Mammary epithelial cell (primary cell): ENCODE measurements at regions of chr7 and their contacts with region 1.

Region 1: GRCh38 chr7:134613623-134614347 is 32.9 kb upstream of the BPGM start:
- DNase-seq: peak; percentile 99
- H3K4me3 ChIP-seq: no peak overlapping the region
- H3K27ac ChIP-seq: peak overlapping the region; percentile 84
- H3K4me1 ChIP-seq: peaks cover 33% of the 10 kb centered on the region
- H3K27me3 ChIP-seq: no peaks in the 10 kb centered on the region
- CTCF ChIP-seq: peak in 1 of 2 donors; percentile 24

Region 2: GRCh38 chr7:134448700-134449229 is 165.0 kb before region 1 on chr7:
- CTCF ChIA-PET with region 1: no interaction called
- dilution Hi-C with region 1: loop called (anchors 25 kb)
- in situ Hi-C with region 1: loop called in 1 of 2 experiments (anchors 10 kb)
- intact Hi-C with region 1: no loop called
- DNase-seq: peak; percentile 90
- H3K4me3 ChIP-seq: no peak overlapping the region
- H3K27ac ChIP-seq: peak overlapping the region; percentile 89
- H3K4me1 ChIP-seq: peaks cover 40% of the 10 kb centered on the region
- H3K27me3 ChIP-seq: no peaks in the 10 kb centered on the region
- CTCF ChIP-seq: no peak

Region 3: GRCh38 chr7:134646425-134647305 is 32.9 kb after region 1 on chr7 and contains the start of gene BPGM:
- CTCF ChIA-PET with region 1: no interaction called
- dilution Hi-C with region 1: no loop called
- in situ Hi-C with region 1: no loop called
- intact Hi-C with region 1: loop called (anchors 1 kb)
- DNase-seq: peak; percentile 100
- H3K4me3 ChIP-seq: peak within 1 kb of the TSS; percentile 87 to 92 (median 92)
- H3K27ac ChIP-seq: peak within 1 kb of the TSS; percentile 83
- H3K4me1 ChIP-seq: peaks cover 14% of the 10 kb centered on the region
- H3K27me3 ChIP-seq: no peaks in the 10 kb centered on the region
- CTCF ChIP-seq: peak; percentile 9 to 26
- total RNA-seq, gene BPGM: 21.3 to 55.2 TPM

Region 4: GRCh38 chr7:134755401-134756022 is 141.7 kb after region 1 on chr7:
- CTCF ChIA-PET with region 1: no interaction called
- dilution Hi-C with region 1: no loop called
- in situ Hi-C with region 1: no loop called
- intact Hi-C with region 1: loop called (anchors 5 kb)
- DNase-seq: no peak
- H3K4me3 ChIP-seq: no peak overlapping the region
- H3K27ac ChIP-seq: no peak overlapping the region
- H3K4me1 ChIP-seq: peaks cover 17% of the 10 kb centered on the region
- H3K27me3 ChIP-seq: no peaks in the 10 kb centered on the region
- CTCF ChIP-seq: peak; percentile 69 to 71

Region 5: DNA sequence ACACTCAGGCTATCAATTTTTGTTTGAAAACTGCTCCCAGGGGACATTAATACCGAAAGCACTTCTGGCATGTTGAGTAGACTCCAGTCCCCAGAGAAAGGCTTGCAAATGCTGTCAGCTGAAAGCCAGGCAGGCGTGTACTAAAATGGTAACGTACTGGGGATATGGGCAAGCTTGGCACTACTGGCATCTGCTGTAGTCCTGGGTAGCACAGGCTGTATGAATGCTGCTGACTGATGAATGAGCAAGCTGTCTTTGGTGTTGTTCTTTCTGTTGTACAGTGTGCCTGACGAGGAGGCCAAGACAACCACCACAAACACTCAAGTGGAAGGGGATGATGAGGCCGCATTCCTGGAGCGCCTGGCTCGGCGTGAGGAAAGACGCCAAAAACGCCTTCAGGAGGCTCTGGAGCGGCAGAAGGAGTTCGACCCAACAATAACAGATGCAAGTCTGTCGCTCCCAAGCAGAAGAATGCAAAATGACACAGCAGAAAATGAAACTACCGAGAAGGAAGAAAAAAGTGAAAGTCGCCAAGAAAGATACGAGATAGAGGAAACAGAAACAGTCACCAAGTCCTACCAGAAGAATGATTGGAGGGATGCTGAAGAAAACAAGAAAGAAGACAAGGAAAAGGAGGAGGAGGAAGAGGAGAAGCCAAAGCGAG is 319.1 kb after region 1 on chr7:
- CTCF ChIA-PET with region 1: no interaction called
- dilution Hi-C with region 1: no loop called
- in situ Hi-C with region 1: no loop called
- intact Hi-C with region 1: no loop called
- DNase-seq: no peak
- H3K4me3 ChIP-seq: no peak overlapping the region
- H3K27ac ChIP-seq: no peak overlapping the region
- H3K4me1 ChIP-seq: no peaks in the 10 kb centered on the region
- H3K27me3 ChIP-seq: no peaks in the 10 kb centered on the region
- CTCF ChIP-seq: no peak

Region 6: DNA sequence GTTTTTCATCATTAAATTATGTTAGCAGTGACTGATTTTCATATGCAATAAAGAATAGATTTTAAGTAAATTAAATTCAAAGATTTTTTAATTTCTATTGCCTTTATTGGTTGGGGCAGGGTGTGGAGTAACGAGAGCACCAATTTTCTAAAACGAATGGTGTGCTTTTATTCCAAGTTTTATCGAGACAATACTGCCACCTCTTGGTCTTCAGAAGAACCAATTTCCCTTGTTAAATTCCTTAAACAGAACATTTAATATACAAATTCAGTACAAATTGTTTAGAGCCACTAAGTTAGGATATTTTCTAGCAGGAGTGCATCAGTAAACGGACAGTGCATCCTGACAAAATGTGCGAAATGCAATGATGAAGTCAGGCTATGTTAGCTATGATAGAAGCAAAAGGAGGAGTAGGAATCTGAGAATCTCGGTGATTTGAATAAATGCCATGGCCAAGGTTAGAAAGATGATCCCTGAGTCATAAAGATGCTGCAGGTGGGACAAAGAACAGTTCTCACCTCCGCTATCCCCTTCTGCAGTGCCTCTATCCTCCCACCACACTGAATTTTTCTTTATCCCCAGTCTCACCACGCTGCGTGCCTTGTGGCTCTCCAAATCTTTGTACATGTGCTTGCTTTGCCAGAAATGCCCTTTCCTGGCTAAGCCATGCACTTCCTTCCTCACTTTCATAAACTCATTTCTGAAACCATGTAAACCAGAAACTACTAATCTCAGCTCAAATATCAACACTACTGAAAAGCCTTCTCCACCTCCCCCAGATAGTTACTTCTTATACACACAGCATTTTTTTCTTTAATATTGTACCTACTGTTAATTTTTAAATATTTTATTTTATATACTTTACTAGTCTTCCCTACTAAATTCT is 340.7 kb after region 1 on chr7:
- CTCF ChIA-PET with region 1: no interaction called
- dilution Hi-C with region 1: no loop called
- in situ Hi-C with region 1: no loop called
- intact Hi-C with region 1: loop called (anchors 5 kb)
- DNase-seq: no peak
- H3K4me3 ChIP-seq: no peak overlapping the region
- H3K27ac ChIP-seq: no peak overlapping the region
- H3K4me1 ChIP-seq: no peaks in the 10 kb centered on the region
- H3K27me3 ChIP-seq: no peaks in the 10 kb centered on the region
- CTCF ChIP-seq: peak; percentile 34 to 47

Region 7: DNA sequence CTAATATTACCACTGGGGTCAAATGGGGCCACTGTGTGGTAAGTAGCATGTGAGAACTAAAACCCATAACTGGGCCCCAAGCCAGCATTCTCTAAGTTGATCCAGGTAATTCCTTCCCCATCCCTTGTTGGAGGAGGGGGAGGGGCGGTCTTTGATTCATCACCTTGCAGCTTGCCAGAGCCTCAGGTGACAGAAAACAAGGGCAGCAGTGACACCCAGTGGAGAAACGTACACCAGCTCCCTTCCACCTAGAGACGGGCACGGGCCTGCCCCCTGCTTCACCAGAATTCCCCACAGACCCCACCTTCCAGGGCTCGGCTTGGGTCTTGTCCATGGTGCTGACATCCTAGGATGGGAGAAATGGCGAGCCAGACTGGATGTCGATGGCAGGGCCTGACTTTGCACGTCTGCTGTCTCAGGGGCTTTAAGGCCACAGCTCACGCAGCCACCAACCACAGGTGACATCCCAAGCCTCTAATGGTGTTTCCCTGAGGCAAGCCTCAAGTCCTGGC is 721.9 kb after region 1 on chr7:
- CTCF ChIA-PET with region 1: no interaction called
- dilution Hi-C with region 1: no loop called
- in situ Hi-C with region 1: no loop called
- intact Hi-C with region 1: loop called (anchors 2 kb)
- DNase-seq: peak; percentile 98
- H3K4me3 ChIP-seq: no peak overlapping the region
- H3K27ac ChIP-seq: no peak overlapping the region
- H3K4me1 ChIP-seq: peaks cover 22% of the 10 kb centered on the region
- H3K27me3 ChIP-seq: no peaks in the 10 kb centered on the region
- CTCF ChIP-seq: peak; percentile 85 to 90